Panc1 (cell line): ENCODE measurements at regions of chr6 and their contacts with region 1.

Region 1: GRCh38 chr6:15348528-15348927 is 102.7 kb downstream of the JARID2 start:
- DNase-seq: no peak
- ATAC-seq: no peak
- H3K4me3 ChIP-seq: no peak overlapping the region
- H3K27ac ChIP-seq: no peak overlapping the region
- H3K4me1 ChIP-seq: no peaks in the 10 kb centered on the region
- H3K27me3 ChIP-seq: no peaks in the 10 kb centered on the region
- CTCF ChIP-seq: no peak

Region 2: DNA sequence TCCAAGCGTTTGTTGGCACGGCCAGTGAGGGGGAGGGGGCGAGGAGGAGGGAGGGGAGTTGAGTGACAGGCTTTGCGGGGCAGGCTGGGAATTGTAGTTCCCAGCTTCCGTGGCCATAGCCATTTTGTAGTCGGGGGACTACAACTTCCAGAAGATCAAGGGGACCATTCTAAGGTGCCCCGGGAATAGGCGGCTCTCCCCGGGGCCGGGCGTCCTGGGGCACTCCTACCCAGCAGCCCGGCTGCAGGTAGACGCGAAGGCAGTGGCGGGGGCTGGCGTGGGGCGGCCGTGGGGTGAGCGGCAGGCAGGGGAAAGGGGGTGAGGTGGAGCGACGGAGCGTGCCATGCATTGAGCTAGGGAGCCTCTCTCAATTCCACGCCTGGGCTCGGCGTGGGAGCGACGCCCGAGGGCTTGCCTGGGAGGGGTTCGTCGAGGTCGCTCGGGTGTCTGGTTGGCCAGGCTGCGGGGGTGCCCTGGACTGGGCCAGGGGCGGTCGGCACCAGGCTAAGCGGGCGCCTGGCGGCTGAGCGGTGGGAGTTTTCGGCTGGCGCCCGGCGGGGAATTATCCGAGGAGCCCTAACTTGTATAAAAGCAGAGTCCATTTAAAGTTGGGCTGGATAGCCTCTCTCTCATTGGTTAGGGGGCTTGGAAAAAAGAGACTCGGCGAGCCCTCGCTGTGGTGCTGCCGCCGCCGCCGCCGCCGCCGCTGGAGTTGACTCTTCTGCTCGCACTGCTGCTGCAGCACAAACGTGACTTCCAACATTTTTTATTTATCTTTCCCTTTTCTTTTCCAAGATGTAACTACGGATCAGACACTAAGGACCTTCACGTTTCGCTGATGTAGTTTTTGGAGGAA is 102.9 kb before region 1 on chr6 and contains the start of gene JARID2:
- CTCF ChIA-PET with region 1: no interaction called
- POLR2A ChIA-PET with region 1: no interaction called
- in situ Hi-C with region 1: no loop called
- intact Hi-C with region 1: no loop called
- DNase-seq: peak; percentile 83
- ATAC-seq: peak; percentile 85
- H3K4me3 ChIP-seq: peak within 1 kb of the TSS; percentile 77 to 81
- H3K27ac ChIP-seq: peak within 1 kb of the TSS; percentile 76
- H3K4me1 ChIP-seq: peaks cover 18% of the 10 kb centered on the region
- H3K27me3 ChIP-seq: no peaks in the 10 kb centered on the region
- CTCF ChIP-seq: no peak
- total RNA-seq, gene JARID2: 6.0 TPM

Region 3: GRCh38 chr6:15283986-15284361 is 64.6 kb before region 1 on chr6:
- CTCF ChIA-PET with region 1: no interaction called
- POLR2A ChIA-PET with region 1: interaction called, 13 read pairs
- in situ Hi-C with region 1: no loop called
- intact Hi-C with region 1: no loop called
- DNase-seq: no peak
- ATAC-seq: no peak
- H3K4me3 ChIP-seq: no peak overlapping the region
- H3K27ac ChIP-seq: no peak overlapping the region
- H3K4me1 ChIP-seq: peaks cover 6% of the 10 kb centered on the region; the same call in 1 of the 2 replicates
- H3K27me3 ChIP-seq: no peaks in the 10 kb centered on the region
- CTCF ChIP-seq: no peak